ENCODE measurements at regions of chr4 and their contacts with region 1.

Region 1: DNA sequence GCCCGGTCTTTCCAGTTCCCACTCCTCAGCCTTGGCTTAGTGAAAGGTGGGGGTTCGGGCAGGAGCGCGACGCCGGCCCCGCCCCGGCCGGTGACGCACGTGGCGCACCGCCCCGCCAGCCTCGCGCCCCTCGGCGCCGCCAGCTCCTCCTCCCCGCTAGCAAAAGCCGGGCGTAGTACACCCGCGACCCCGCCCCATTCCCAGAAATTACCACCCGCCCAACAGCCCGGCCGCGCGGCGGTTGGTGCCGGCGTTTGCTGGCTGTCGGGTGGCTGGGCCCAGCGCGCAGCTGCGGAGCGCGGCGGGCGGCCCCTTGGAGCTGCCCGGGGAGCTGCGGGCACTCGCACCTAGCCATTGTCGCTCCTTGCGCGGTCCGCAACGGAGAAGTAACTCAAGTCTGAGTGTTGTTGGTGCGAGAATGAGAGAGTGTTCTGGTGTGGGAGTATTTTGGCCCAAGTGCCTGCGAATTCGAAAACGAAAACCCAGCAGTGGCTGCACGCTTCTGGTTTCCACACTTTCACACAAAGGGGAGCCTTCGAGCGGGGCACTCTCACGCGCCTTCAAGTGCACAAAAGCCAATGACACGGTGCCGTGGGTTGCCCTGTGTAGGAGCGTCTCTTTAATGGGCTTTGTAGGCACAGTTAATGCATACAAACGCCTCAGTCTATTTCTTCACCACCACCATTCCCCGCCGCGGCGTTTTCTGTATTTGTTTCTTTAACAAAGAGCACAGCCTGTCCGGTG is 1.0 kb upstream of the ELF2 start:
- DNase-seq: peak; percentile 97
- H3K4me3 Mint-ChIP-seq: peak overlapping the region; percentile 86
- H3K27ac Mint-ChIP-seq: peak overlapping the region; percentile 91
- H3K4me1 Mint-ChIP-seq: peaks cover 36% of the 10 kb centered on the region
- H3K27me3 Mint-ChIP-seq: peaks cover 50% of the 10 kb centered on the region

Region 2: DNA sequence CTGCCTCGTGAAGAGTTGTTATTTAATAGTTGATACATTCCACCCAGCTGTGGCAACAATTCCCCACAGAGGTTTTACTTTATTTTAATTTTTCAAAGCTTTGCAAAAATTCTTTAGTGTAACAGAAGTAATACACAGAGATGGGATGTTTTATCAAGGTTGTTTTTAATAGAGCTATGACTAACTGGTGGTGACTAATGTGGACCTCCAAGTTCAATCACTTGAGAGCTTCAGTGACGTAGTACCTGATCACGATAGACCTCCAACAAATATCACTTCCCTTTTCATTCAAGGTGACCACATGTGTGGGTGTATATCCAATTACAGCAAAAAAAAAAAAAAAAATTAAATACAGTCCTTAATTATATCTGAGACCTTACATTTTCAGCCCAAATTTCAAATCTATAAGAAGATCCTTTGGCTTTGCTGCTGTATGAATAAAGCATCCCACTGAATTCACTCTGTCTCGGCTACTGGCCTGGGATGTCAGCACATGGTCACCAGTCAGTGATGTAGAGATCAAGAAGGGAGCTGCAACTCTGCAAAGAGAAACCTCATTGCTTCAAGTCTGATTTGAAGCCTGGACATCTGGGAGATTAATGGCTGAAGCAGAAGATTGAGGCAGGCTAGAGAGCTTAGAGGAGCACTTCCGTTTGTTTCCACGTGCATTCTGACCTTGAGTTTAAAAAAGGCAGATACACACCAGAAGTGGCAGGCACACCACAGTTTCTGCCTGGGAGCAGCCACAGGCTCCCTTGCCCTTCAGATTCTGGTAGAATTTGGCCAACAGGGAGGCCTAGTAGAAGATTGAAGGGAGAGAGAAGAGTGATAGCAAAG is 508.3 kb before region 1 on chr4:
- intact Hi-C with region 1: no loop called
- DNase-seq: no peak
- H3K4me3 Mint-ChIP-seq: no peak overlapping the region
- H3K27ac Mint-ChIP-seq: no peak overlapping the region
- H3K4me1 Mint-ChIP-seq: no peaks in the 10 kb centered on the region
- H3K27me3 Mint-ChIP-seq: peaks cover 2% of the 10 kb centered on the region

Region 3: DNA sequence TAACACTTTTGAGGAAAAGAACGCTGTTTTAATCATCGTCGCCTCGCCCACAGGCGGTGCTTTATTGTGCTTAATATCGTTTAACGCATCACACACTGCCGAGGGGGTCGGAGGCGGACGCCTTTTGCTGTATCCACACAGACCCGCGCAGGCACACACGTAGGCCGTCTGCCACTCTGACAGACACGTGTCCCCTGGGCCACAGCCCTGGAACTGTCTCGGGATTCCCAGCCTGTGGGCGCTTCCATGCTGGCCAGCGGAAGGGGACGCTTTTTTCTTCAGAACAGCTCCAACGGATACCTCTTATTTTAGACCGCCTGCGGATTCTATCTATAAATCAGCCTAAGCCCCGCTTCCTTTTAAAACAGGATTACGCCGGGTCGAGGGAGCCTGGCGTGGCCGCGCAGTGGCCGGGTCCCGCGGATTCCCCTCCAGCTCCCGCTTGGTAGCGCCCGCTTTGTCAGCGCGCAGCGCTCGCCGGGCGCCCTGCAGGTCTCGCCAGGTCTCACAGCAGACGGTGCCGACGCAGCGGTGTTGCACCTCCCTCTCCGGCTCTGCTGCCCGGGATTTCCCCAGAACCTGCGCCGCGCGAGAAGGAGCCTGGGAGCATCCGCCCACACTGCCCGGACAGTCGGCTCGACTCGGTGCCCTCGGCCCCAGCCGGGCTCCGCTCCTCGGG is 162.6 kb before region 1 on chr4 and contains the start of gene NOCT:
- intact Hi-C with region 1: loop called (anchors 1 kb)
- DNase-seq: peak; percentile 90
- H3K4me3 Mint-ChIP-seq: peak within 1 kb of the TSS; percentile 96
- H3K27ac Mint-ChIP-seq: peak within 1 kb of the TSS; percentile 91
- H3K4me1 Mint-ChIP-seq: peaks cover 43% of the 10 kb centered on the region
- H3K27me3 Mint-ChIP-seq: no peaks in the 10 kb centered on the region
- total RNA-seq, gene NOCT: 24.1 and 26.9 TPM in 2 replicates

Region 4: DNA sequence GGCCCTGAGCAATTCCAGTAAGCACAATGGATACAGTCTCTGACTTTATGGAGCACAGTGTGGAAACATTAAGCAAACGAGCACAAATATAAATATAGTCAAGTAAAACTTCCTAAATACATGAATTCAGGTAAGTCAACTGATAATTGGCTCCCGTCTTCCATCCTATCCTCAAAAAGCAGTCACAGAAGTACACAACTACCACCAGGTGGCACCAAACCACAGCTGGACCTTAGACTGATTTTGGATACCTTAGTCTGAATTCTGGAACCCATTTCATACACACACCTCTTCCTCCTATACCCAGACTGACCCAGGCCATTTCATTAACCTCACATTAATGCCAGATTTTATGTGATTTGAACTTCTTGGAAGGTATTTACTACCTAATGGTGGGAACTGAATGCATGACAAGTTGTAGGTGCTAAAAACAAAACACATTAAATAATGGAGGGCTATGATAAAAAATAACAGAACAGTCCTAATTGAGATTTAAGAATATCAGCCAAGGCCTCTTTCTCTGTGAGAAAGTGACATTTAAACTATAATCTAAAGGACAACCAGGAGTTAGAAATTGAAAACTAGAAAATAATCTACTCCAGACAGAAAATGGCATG is 78.6 kb before region 1 on chr4:
- intact Hi-C with region 1: loop called (anchors 1 kb)
- DNase-seq: peak; percentile 54
- H3K4me3 Mint-ChIP-seq: no peak overlapping the region
- H3K27ac Mint-ChIP-seq: no peak overlapping the region
- H3K4me1 Mint-ChIP-seq: no peaks in the 10 kb centered on the region
- H3K27me3 Mint-ChIP-seq: no peaks in the 10 kb centered on the region

Region 5: DNA sequence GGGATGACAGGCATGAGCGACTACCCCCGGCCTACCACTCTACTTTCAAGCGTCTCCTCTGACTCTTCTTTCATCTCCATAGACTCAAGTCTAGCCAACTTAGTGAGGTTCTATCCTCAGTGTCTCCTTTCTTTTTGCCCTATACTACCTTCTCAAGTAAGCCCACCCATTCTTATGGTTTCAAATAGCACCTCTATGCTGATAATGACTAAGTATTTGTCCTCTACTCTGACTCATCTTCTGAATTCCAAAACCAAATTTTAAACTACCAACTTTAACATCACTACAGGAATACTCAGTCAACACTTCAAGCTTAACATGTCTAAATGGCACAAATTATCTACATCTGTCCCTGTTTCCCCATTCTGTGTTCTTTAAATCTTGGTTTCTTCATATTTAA is 48.8 kb before region 1 on chr4:
- intact Hi-C with region 1: no loop called
- DNase-seq: no peak
- H3K4me3 Mint-ChIP-seq: no peak overlapping the region
- H3K27ac Mint-ChIP-seq: no peak overlapping the region
- H3K4me1 Mint-ChIP-seq: no peaks in the 10 kb centered on the region
- H3K27me3 Mint-ChIP-seq: peaks cover 2% of the 10 kb centered on the region

Region 6: GRCh38 chr4:139208404-139208945 is 30.4 kb after region 1 on chr4:
- intact Hi-C with region 1: no loop called
- DNase-seq: no peak
- H3K4me3 Mint-ChIP-seq: no peak overlapping the region
- H3K27ac Mint-ChIP-seq: no peak overlapping the region
- H3K4me1 Mint-ChIP-seq: no peaks in the 10 kb centered on the region
- H3K27me3 Mint-ChIP-seq: peaks cover 3% of the 10 kb centered on the region

Region 7: GRCh38 chr4:139273835-139274234 is 95.8 kb after region 1 on chr4:
- intact Hi-C with region 1: no loop called
- DNase-seq: no peak
- H3K4me3 Mint-ChIP-seq: no peak overlapping the region
- H3K27ac Mint-ChIP-seq: no peak overlapping the region
- H3K4me1 Mint-ChIP-seq: peaks cover 4% of the 10 kb centered on the region
- H3K27me3 Mint-ChIP-seq: peaks cover 31% of the 10 kb centered on the region

Region 8: GRCh38 chr4:139295206-139295941 is 117.3 kb after region 1 on chr4:
- intact Hi-C with region 1: loop called (anchors 1 kb)
- DNase-seq: peak; percentile 92
- H3K4me3 Mint-ChIP-seq: peak overlapping the region; percentile 93
- H3K27ac Mint-ChIP-seq: peak overlapping the region; percentile 94
- H3K4me1 Mint-ChIP-seq: peaks cover 39% of the 10 kb centered on the region
- H3K27me3 Mint-ChIP-seq: no peaks in the 10 kb centered on the region

Region 9: DNA sequence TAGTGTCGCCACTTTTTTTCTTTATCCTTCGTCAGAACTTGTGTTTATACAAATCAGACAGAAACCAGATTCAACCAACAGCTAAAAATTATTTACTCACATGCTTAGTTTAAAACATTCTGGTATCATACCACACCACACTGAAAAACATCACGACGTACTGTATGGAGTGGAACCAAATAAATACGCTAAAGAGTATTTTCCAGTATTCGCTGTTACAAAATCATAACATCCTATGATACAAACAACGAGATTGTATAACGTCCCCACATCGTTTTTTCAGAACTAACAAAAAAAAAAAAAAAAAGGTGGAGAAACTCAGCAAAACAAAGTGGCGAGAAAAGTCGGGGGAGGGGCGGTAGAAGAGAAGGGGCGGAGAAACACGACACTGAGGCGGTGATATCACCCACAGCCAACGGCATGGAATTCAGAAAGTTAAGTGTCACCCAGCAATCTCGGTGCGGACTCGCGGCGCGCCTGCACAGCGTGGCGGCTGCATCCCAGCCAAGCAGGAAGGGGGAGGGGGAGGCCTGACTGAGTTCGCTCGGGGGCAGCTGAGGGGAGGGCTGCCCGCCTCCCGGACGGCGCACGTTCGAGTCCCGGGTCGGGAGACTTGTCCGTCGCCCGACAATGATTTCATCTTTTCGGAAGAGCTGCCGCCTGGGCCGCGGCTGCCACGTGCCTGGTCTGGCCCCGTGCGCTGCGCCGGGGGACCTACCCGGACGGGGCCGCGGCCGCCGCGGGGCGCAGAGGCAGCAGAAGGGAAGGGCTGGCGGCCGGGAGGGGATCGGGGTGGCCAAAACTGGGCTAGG is 377.1 kb after region 1 on chr4:
- intact Hi-C with region 1: loop called (anchors 2 kb)
- DNase-seq: peak; percentile 78
- H3K4me3 Mint-ChIP-seq: peak overlapping the region; percentile 93
- H3K27ac Mint-ChIP-seq: peak overlapping the region; percentile 96
- H3K4me1 Mint-ChIP-seq: peaks cover 47% of the 10 kb centered on the region
- H3K27me3 Mint-ChIP-seq: peaks cover 13% of the 10 kb centered on the region

Region 10: DNA sequence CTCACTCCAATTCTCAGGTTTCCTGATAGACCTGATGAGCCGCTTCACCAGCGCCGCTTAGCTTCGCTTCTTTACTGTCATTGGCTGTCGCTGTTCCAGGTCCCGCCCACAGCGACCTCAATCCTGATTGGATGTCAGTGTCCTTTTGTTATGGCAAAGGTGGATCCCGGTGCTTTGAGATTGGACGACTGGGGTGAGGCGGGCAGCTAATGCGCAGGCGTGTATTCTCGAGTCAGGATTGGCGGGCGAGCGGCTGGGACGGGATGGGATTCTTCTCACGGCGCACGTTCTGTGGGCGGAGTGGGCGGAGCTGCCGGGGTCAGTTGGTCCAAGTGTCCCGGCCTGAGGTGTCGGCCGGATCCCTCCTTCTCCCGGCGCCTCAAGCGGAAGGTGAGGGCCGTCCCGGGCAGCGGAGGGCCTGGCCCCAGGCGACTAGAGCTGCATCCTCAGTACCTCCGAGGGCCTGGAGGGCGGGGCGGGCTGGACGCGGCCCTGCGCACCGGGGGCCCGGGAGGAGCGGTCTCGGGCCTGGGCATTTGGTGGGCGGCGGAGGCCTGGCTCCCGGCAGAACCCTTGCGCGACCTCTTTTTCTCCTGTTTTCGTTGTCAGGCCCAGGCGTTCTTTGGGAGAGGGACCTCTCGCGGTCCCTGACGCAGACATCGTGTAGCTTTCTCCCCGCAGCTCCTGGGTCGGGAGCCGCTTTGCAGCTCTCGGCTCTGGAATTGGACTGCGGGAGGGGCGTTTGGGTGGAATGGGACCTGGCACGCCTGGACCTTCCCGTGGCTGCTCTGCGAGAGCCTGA is 1195.5 kb after region 1 on chr4 and contains the start of gene SCOC:
- intact Hi-C with region 1: loop called (anchors 5 kb)
- DNase-seq: peak; percentile 97
- H3K4me3 Mint-ChIP-seq: no peak within 1 kb of the TSS
- H3K27ac Mint-ChIP-seq: peak within 1 kb of the TSS; percentile 32
- H3K4me1 Mint-ChIP-seq: peaks cover 23% of the 10 kb centered on the region
- H3K27me3 Mint-ChIP-seq: no peaks in the 10 kb centered on the region
- total RNA-seq, gene SCOC: 33.9 and 34.0 TPM in 2 replicates